Endothelial cell of umbilical vein (primary cell): ENCODE measurements at regions of chr6 and their contacts with region 1.

Region 1: DNA sequence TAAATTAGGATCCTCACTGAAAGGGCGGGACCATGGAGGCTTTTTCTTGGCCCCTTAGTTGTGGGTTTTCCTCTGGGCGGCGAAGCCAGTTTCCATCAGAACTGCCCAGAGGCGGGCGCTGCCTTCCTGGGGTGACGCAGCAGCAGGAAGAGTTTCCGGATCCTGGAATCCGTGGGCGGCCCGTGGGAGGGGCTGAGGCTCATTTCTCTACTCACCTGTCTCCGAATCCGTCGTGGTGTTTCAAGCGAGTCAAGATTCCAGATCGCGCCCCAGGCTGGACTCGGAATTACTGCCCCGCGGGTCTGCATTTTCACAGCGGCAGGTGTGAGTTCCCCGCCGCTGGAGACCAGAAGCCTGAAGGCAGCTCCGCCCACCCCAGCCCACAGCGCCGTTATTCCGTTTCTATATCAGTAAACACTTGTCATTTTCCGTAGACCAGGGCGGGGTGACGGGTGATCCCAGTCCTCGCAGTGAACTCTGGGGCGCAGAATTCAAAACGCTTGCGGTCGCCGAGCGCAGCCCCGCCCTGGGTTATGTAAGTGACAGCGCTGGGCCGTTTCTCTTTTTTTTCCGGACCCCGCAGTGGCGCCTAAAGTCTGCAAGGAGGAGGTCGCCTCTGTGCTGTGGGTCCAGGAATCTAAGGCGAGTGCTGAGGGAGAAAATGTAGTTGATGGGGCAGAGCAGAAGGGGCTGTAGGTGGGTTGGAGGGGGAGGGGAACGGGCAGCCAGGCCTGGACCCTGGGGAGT is 27.2 kb upstream of the POU5F1 start:
- DNase-seq: peak; percentile 74
- H3K4me3 ChIP-seq: peak overlapping the region; percentile 51 to 88 (median 79)
- H3K27ac ChIP-seq: peak overlapping the region; percentile 93
- H3K4me1 ChIP-seq: peaks cover 4% of the 10 kb centered on the region
- H3K27me3 ChIP-seq: no peaks in the 10 kb centered on the region
- CTCF ChIP-seq: no peak
- POLR2A ChIP-seq: peak; percentile 27

Region 2: GRCh38 chr6:30828027-30828960 is 369.4 kb before region 1 on chr6:
- CTCF ChIA-PET with region 1: interaction called, 4 read pairs
- POLR2A ChIA-PET with region 1: no interaction called
- dilution Hi-C with region 1: no loop called
- intact Hi-C with region 1: loop called (anchors 5 kb)
- DNase-seq: peak; percentile 92
- H3K4me3 ChIP-seq: no peak overlapping the region
- H3K27ac ChIP-seq: no peak overlapping the region
- H3K4me1 ChIP-seq: peaks cover 15% of the 10 kb centered on the region
- H3K27me3 ChIP-seq: no peaks in the 10 kb centered on the region
- CTCF ChIP-seq: peak; percentile 89
- POLR2A ChIP-seq: no peak

Region 3: DNA sequence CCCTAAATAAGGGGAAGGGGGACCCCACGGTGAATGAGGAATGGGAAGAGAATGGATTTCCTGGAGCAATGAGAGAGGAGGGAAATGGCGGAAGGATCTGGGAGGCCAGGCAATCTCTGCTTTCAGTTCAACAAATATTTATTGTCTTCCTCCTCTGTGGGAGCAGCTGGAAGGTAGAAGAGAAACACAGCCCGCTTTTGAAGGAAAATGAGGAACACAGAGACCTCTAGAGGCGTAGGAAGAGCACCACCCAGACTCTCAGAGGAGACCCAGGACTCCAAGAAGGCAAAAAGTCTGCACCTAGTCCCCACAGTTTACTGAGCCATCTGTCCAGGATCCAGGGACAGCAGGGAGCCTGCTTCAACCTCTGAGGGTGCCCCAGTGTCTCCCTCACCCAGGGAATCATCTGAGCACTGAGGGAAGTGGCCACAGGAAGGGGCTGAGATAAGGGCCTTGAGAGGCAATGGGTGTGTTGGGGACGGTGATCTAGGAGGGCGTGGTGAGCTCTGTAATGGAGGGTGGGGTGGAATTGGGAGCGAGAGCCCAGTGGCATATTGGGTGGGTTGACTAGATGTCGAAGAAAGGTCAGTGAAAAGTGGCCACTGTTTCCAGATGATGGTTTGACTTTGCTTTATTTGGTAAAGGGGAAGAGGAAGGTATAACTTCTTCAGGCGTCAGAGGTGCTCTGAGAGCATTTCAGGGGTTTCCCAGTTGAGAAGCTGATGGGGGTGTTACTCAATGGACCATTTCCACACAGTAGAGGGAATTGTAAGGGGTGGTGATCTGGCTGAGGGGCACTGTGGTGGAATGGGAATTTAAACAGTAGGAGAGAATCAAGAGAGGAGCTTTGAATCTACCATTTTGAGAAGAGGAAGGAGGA is 82.5 kb before region 1 on chr6:
- CTCF ChIA-PET with region 1: interaction called, 14 read pairs
- POLR2A ChIA-PET with region 1: no interaction called
- dilution Hi-C with region 1: no loop called
- intact Hi-C with region 1: no loop called
- DNase-seq: peak; percentile 51
- H3K4me3 ChIP-seq: peak overlapping the region in 1 of 3 experiments; percentile 3
- H3K27ac ChIP-seq: peak overlapping the region; percentile 51
- H3K4me1 ChIP-seq: peaks cover 21% of the 10 kb centered on the region
- H3K27me3 ChIP-seq: peaks cover 4 to 6% of the 10 kb centered on the region in 2 experiments
- CTCF ChIP-seq: peak; percentile 13 to 20
- POLR2A ChIP-seq: no peak

Region 4: DNA sequence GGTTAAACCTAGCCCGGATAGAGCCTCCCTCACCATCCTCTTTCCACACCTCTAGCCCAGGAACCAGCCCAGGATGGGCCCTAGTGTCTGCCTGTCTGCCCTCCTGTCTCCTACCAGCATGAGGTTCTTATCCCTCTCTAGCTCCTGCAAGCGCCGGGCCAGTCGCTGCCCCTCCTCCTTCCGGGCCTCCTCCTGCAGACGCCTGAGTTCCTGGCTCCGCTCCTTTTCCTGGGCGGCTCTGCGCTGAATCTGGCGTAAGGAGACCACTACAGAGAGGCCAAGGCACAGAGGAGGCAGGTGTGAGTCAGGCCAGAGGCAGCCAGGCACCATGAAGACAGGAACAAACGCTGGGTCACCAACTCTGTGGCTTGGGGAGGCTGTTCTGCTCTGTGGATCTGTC is 54.6 kb before region 1 on chr6:
- CTCF ChIA-PET with region 1: interaction called, 174 read pairs
- POLR2A ChIA-PET with region 1: no interaction called
- dilution Hi-C with region 1: no loop called
- intact Hi-C with region 1: no loop called
- DNase-seq: no peak
- H3K4me3 ChIP-seq: no peak overlapping the region
- H3K27ac ChIP-seq: no peak overlapping the region
- H3K4me1 ChIP-seq: peaks cover 8% of the 10 kb centered on the region
- H3K27me3 ChIP-seq: no peaks in the 10 kb centered on the region
- CTCF ChIP-seq: no peak
- POLR2A ChIP-seq: no peak

Region 5: GRCh38 chr6:31180502-31180901 is 17.2 kb before region 1 on chr6:
- CTCF ChIA-PET with region 1: interaction called, 12 read pairs
- POLR2A ChIA-PET with region 1: no interaction called
- dilution Hi-C with region 1: no loop called
- intact Hi-C with region 1: no loop called
- DNase-seq: peak; percentile 89
- H3K4me3 ChIP-seq: peak overlapping the region in 2 of 3 experiments; percentile 12 to 53
- H3K27ac ChIP-seq: no peak overlapping the region
- H3K4me1 ChIP-seq: peaks cover 6% of the 10 kb centered on the region
- H3K27me3 ChIP-seq: no peaks in the 10 kb centered on the region
- CTCF ChIP-seq: no peak
- POLR2A ChIP-seq: no peak

Region 6: DNA sequence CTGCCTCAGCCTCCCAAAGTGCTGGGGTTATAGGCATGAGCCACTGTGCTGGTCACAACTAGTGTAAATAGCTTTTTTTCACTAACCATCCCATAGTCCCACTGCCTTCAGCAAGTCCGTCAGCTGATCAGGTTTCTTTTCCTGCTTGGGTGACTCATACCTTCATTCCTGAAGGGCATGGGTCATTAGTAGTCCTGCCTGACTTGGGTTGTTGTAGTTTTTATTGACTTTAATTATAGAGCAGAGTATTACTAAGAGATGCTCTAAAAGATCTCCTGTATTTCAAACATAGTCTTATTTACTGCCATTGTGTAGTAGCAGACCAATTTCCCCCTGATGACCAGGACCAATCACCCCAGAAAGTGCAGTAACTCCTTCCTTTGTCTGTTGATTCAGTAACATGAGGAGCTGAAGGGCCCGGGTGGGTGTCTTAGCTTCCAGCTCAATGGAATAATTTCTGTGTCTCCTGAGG is 48.4 kb after region 1 on chr6:
- CTCF ChIA-PET with region 1: no interaction called
- POLR2A ChIA-PET with region 1: no interaction called
- dilution Hi-C with region 1: no loop called
- intact Hi-C with region 1: no loop called
- DNase-seq: peak; percentile 66
- H3K4me3 ChIP-seq: no peak overlapping the region
- H3K27ac ChIP-seq: no peak overlapping the region
- H3K4me1 ChIP-seq: peaks cover 3% of the 10 kb centered on the region
- H3K27me3 ChIP-seq: peaks cover 5 to 22% of the 10 kb centered on the region in 2 experiments
- CTCF ChIP-seq: no peak
- POLR2A ChIP-seq: no peak

Region 7: DNA sequence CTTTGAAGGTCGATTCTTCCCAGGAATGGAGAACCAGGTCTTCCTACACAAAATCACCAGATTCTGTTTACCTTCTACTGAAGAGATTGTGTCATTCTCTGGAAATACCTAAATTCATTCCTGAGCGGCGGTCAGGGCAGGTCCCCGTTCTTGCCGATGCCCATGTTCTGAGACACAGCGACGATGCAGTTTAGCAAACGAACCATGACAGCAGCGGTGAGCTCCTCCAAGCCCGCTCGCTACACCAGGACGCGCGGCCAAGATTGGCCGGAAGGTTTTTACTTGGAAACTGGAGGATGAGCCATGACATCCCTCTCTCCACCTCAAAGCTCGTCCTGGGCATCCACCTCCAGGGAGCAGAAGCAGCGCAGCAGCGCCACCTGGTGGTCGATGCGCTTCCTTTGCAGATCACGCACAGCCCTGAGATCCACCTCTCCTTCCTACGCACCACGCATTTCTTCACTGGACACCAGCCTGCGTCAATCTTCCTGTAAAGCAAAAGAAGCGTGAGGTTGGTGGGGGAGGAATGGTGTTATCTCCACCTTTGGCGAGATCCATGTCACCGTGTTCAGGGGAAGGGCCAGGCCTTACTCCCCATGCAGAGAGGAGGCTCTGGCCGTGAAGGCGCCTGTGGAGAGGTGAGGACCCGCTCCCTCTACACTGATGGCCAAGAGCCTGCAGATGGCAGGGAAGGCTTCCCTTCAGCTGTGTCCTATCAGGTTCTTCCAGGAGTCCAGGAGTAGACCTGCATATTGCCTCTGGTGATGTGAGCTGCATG is 169.2 kb after region 1 on chr6:
- CTCF ChIA-PET with region 1: interaction called, 233 read pairs
- POLR2A ChIA-PET with region 1: no interaction called
- dilution Hi-C with region 1: no loop called
- intact Hi-C with region 1: loop called (anchors 1 kb)
- DNase-seq: peak; percentile 80
- H3K4me3 ChIP-seq: no peak overlapping the region
- H3K27ac ChIP-seq: no peak overlapping the region
- H3K4me1 ChIP-seq: no peaks in the 10 kb centered on the region
- H3K27me3 ChIP-seq: peaks cover 39 to 44% of the 10 kb centered on the region in 2 experiments
- CTCF ChIP-seq: peak; percentile 93 to 95
- POLR2A ChIP-seq: no peak

Region 8: GRCh38 chr6:31441365-31442267 is 243.9 kb after region 1 on chr6:
- CTCF ChIA-PET with region 1: no interaction called
- POLR2A ChIA-PET with region 1: no interaction called
- dilution Hi-C with region 1: no loop called
- intact Hi-C with region 1: loop called (anchors 1 kb)
- DNase-seq: peak; percentile 56
- H3K4me3 ChIP-seq: no peak overlapping the region
- H3K27ac ChIP-seq: no peak overlapping the region
- H3K4me1 ChIP-seq: no peaks in the 10 kb centered on the region
- H3K27me3 ChIP-seq: peaks cover 22 to 40% of the 10 kb centered on the region in 2 experiments
- CTCF ChIP-seq: peak; percentile 85 to 90
- POLR2A ChIP-seq: no peak

Region 9: DNA sequence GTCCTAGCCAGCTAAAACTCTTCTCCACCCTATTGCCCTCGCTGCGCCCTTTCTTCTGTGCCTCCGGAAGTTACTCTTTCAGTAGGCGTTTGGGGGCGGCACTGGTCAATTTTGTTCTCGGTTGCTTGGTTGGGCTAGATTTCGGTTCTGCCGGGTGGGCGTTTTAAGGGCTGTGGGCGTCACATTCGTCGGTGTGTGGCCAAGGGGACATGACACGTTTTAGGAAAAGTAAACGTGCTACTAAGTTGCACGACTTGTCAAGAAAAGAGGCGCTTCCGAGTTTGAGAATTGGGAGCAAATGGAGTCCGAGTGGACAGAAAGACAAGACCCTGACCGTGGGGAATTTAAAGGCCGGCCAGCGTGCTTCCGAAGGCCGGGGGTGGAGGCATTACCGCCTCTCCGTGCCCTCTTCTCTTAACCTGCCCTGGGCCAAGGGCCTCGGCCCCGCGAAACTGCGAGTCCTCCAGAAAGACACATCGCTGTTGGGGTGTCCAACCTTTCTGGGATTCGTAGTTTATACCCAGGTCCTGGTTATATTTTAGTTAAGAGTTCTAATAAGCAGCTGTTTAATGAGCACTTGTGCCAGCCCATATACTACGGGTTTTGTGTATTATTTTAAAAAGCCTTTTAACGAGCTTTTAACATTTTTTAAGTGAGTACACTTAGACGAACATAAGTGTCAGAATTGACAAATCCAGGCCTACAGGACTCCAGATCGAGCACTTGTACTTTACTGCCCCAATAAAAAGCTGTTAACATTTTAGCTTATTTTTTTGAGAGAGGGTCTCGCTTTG is 455.4 kb after region 1 on chr6:
- CTCF ChIA-PET with region 1: no interaction called
- POLR2A ChIA-PET with region 1: no interaction called
- dilution Hi-C with region 1: no loop called
- intact Hi-C with region 1: no loop called
- DNase-seq: no peak
- H3K4me3 ChIP-seq: peak overlapping the region; percentile 23 to 80 (median 62)
- H3K27ac ChIP-seq: peak overlapping the region; percentile 83
- H3K4me1 ChIP-seq: peaks cover 23% of the 10 kb centered on the region
- H3K27me3 ChIP-seq: no peaks in the 10 kb centered on the region
- CTCF ChIP-seq: no peak
- POLR2A ChIP-seq: no peak